ENCODE measurements at regions of chr20 and their contacts with region 1.

Region 1: GRCh38 chr20:58818585-58819285 is 32.0 kb downstream of the GNAS-AS1 start:
- DNase-seq: peak; percentile 91
- ATAC-seq: peak; percentile 97
- H3K4me3 Mint-ChIP-seq: no peak overlapping the region
- H3K27ac Mint-ChIP-seq: no peak overlapping the region
- H3K4me1 Mint-ChIP-seq: peaks cover 16% of the 10 kb centered on the region
- H3K27me3 Mint-ChIP-seq: peaks cover 24% of the 10 kb centered on the region

Region 2: DNA sequence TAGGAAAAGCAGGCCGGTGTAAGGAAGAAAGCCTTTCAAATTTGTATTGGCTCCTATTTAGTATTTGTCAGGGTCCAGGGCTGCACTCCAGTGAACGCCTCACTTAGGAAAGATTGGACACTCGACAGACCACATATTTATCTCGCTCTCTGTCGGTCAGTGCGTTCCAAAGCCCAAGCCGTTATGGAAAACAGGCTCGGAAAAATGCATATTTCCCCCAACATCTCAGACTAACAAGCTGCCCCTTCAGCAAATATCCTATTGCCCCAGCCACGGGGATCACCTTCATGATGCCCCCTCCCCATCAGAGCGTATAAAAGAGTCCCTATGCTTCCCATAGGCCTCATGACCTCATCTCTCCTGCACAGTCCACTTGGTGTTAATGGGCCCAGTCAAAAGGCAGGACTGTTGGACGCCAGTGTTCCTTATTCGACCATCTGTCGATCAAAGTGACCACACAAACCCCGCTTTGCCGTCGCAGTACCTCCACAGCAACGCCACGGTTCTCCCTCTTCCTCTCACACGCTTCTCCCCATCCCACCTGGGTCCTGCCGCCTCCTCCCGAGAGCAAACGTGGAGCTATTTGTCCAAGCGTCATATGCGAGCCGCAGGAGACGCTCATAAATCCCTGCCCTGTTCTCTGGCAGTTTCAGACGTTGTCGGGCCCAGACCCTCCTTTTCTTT is 62.8 kb before region 1 on chr20:
- CTCF ChIA-PET with region 1: no interaction called
- POLR2A ChIA-PET with region 1: no interaction called
- intact Hi-C with region 1: no loop called
- DNase-seq: no peak
- ATAC-seq: no peak
- H3K4me3 Mint-ChIP-seq: no peak overlapping the region
- H3K27ac Mint-ChIP-seq: no peak overlapping the region
- H3K4me1 Mint-ChIP-seq: no peaks in the 10 kb centered on the region
- H3K27me3 Mint-ChIP-seq: peaks cover 15% of the 10 kb centered on the region

Region 3: DNA sequence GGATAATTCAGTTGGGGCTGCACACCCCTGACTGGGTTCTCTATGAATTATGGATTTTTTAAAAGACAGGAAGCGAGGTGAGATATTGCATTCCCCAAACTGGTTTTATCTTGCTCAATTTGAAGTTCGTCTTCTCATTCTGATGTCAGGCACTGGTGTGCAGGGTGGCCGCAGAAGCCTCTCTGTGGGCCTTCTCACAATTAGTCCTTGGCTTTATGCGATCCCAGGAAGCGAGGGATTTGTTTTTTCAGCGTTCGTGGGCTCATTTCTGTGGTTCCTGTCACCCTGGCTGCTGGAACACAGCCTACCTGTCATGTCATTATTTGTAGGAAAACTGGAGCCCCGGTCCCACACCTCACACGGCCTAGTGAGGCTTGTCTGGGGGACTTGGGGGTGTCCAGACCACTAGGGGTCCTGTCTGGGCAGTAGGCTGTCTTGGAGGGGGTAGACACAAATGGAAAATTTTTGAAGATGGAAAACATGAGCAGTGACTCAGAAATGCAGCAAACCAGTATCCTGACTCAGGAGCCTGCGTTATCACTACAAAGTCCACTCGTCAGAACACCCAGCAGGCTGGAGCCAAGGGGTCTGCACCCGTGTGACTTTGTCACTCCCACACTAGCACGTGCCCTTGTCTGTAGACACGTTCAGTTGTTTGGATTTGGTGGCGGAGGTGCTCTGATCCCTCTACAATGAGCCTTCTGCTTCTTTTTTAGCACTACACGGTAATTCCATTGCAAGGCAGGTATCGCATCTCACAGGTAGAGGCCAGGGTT is 10.3 kb before region 1 on chr20:
- CTCF ChIA-PET with region 1: no interaction called
- POLR2A ChIA-PET with region 1: no interaction called
- intact Hi-C with region 1: no loop called
- DNase-seq: no peak
- ATAC-seq: no peak
- H3K4me3 Mint-ChIP-seq: no peak overlapping the region
- H3K27ac Mint-ChIP-seq: no peak overlapping the region
- H3K4me1 Mint-ChIP-seq: peaks cover 2% of the 10 kb centered on the region
- H3K27me3 Mint-ChIP-seq: peaks cover 42% of the 10 kb centered on the region

Region 4: GRCh38 chr20:58850693-58851174 is 32.0 kb after region 1 on chr20 and contains the start of gene GNAS-AS1:
- CTCF ChIA-PET with region 1: interaction called, 3 read pairs
- POLR2A ChIA-PET with region 1: interaction called, 3 read pairs
- intact Hi-C with region 1: loop called in 1 of 2 experiments (anchors 1 kb)
- DNase-seq: peak; percentile 91
- ATAC-seq: peak; percentile 91
- H3K4me3 Mint-ChIP-seq: peak within 1 kb of the TSS; percentile 77
- H3K27ac Mint-ChIP-seq: peak within 1 kb of the TSS; percentile 59
- H3K4me1 Mint-ChIP-seq: peaks cover 27% of the 10 kb centered on the region
- H3K27me3 Mint-ChIP-seq: peaks cover 41% of the 10 kb centered on the region
- total RNA-seq, gene GNAS-AS1: 1.1 to 1.9 TPM